ENCODE measurements at regions of chr4 and their contacts with region 1.

Region 1: DNA sequence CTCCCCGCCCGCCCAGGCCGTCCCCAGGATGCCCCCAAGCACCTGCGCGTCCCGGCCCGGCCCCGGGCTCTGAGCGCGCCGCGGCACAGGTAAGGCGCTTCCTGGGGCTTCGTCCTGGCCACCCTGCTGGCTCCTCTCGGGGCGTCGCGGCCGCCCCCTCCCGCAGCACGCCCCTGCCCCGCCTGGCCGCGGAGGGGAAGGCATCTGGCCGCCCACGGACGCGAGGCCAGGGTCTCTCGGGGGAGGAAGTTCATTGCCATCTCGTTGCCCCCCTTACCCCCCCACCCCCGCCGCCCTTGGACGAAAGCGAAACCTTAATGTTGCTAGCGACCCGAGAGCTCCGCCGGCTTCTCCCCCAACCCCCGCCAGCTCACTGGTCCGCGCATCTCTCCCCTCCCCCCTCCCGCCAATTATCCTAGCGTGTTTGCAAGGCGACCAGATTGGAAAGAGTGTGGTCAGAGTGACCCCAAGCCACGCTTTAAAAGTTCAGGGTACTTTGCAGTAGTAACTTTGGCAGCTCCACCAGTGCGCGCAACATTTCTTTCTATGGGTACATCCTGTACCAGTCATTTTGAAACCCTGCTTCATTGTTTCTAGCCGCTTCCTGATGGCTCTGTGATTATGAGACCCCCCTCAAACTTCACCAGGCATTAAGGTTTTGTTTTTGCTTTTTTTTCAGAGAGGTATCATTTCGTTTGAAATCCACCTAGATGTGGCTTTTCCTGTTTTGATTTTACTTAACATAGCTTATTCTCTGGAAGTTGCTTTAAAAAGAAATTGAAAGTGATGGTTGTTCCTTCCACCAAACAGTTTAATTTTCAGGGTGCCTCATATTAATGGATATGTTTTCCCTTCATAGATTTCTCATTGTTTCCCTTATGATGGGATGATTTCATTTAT is 626 bp downstream of the TBC1D1 start:
- DNase-seq: peak; percentile 86
- ATAC-seq: peak; percentile 73
- H3K4me3 Mint-ChIP-seq: peak overlapping the region; percentile 87
- H3K27ac Mint-ChIP-seq: peak overlapping the region; percentile 91
- H3K4me1 Mint-ChIP-seq: peaks cover 31% of the 10 kb centered on the region
- H3K27me3 Mint-ChIP-seq: peaks cover 6% of the 10 kb centered on the region

Region 2: DNA sequence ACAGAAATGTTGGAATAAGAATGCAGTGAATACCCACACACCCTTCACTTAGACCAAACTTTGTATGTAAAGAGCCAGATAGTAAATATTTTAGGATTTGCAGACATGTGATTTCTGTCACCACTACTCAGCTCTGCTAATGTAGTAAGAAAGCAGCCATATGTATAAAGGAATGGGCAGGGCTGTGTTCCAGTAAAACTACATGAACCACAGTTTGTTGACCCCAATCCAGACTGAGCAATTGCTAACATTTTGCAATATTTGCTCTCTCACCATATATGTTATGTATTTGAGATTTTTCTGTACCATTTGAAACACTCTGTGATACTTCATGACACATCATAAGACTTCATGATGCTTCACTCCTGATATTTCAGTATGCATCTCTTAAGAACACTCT is 32.6 kb before region 1 on chr4:
- CTCF ChIA-PET with region 1: no interaction called
- DNase-seq: no peak
- ATAC-seq: no peak
- H3K4me3 Mint-ChIP-seq: no peak overlapping the region
- H3K27ac Mint-ChIP-seq: no peak overlapping the region
- H3K4me1 Mint-ChIP-seq: no peaks in the 10 kb centered on the region
- H3K27me3 Mint-ChIP-seq: no peaks in the 10 kb centered on the region

Region 3: GRCh38 chr4:37936889-37937498 is 45.5 kb after region 1 on chr4:
- CTCF ChIA-PET with region 1: no interaction called
- DNase-seq: no peak
- ATAC-seq: no peak
- H3K4me3 Mint-ChIP-seq: no peak overlapping the region
- H3K27ac Mint-ChIP-seq: no peak overlapping the region
- H3K4me1 Mint-ChIP-seq: no peaks in the 10 kb centered on the region
- H3K27me3 Mint-ChIP-seq: no peaks in the 10 kb centered on the region

Region 4: GRCh38 chr4:37977471-37978247 is 86.1 kb after region 1 on chr4:
- CTCF ChIA-PET with region 1: interaction called, 11 read pairs
- DNase-seq: peak; percentile 84
- ATAC-seq: peak; percentile 83
- H3K4me3 Mint-ChIP-seq: peak overlapping the region; percentile 77
- H3K27ac Mint-ChIP-seq: peak overlapping the region; percentile 66
- H3K4me1 Mint-ChIP-seq: peaks cover 28% of the 10 kb centered on the region
- H3K27me3 Mint-ChIP-seq: no peaks in the 10 kb centered on the region